Mammary epithelial cell (primary cell): ENCODE measurements at regions of chr1 and their contacts with region 1.

Region 1: DNA sequence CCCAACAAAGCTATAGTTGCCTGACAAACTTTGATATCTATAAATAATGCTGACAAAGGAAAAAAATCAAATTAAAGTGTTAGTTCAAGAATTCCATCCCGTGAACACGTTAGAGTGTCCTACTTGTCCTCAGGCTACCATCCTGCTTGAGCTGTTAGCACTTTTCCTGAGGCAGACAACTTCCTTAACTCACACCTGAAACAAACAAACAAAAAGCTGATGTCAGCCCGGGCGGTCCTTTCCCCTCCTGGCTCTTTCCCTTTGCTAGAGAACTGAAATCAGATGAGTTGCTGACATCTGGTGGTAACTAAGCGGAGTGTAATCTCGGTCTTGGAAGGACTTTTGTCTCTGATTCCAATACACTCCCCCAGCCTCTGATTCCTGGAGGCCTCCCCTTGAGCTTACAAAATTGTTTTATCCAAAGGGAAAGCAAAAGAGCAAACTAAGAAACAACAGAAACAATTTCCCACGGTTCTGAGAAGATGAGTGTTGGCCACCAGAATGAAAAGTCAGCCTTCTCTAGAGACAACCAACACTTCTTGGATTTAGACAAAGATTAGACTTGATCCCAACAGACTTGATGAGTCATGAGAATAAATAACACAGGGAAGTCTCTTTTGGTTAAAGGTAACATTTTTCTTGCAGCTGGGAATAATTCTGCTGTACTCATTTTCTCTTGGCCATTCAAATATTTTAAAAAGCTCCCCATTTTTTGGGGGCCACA is 135.4 kb downstream of the PROX1 start:
- DNase-seq: peak; percentile 46
- H3K4me3 ChIP-seq: no peak overlapping the region
- H3K27ac ChIP-seq: no peak overlapping the region
- H3K4me1 ChIP-seq: no peaks in the 10 kb centered on the region
- H3K27me3 ChIP-seq: no peaks in the 10 kb centered on the region
- CTCF ChIP-seq: peak; percentile 57 to 71

Region 2: DNA sequence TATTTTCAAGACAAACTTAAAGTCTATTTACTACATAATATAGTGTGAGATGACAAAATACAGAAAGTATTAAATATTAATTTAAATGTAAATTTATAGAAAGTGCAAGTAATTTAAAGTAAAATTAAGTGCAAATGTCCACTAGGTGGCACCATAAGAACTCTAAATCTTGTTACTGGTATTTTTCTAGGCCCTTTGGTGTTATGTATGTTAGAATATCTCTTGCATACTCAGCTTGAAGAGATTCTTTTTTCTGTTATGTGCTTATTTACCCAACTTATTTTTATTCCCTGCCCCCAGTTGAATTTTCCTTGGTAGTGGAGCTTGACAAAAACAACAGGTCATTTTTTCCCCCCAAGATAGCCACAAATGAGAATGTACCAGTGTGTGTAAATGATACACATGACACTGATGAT is 1000.7 kb before region 1 on chr1:
- CTCF ChIA-PET with region 1: no interaction called
- dilution Hi-C with region 1: no loop called
- in situ Hi-C with region 1: no loop called
- intact Hi-C with region 1: loop called (anchors 1 kb)
- DNase-seq: peak; percentile 24
- H3K4me3 ChIP-seq: no peak overlapping the region
- H3K27ac ChIP-seq: no peak overlapping the region
- H3K4me1 ChIP-seq: peaks cover 21% of the 10 kb centered on the region
- H3K27me3 ChIP-seq: no peaks in the 10 kb centered on the region
- CTCF ChIP-seq: peak; percentile 32 to 43

Region 3: GRCh38 chr1:213374369-213374768 is 748.9 kb before region 1 on chr1:
- CTCF ChIA-PET with region 1: no interaction called
- dilution Hi-C with region 1: no loop called
- in situ Hi-C with region 1: loop called (anchors 10 kb)
- intact Hi-C with region 1: loop called (anchors 1 kb)
- DNase-seq: peak; percentile 23
- H3K4me3 ChIP-seq: no peak overlapping the region
- H3K27ac ChIP-seq: no peak overlapping the region
- H3K4me1 ChIP-seq: no peaks in the 10 kb centered on the region
- H3K27me3 ChIP-seq: no peaks in the 10 kb centered on the region
- CTCF ChIP-seq: peak; percentile 83 to 90

Region 4: DNA sequence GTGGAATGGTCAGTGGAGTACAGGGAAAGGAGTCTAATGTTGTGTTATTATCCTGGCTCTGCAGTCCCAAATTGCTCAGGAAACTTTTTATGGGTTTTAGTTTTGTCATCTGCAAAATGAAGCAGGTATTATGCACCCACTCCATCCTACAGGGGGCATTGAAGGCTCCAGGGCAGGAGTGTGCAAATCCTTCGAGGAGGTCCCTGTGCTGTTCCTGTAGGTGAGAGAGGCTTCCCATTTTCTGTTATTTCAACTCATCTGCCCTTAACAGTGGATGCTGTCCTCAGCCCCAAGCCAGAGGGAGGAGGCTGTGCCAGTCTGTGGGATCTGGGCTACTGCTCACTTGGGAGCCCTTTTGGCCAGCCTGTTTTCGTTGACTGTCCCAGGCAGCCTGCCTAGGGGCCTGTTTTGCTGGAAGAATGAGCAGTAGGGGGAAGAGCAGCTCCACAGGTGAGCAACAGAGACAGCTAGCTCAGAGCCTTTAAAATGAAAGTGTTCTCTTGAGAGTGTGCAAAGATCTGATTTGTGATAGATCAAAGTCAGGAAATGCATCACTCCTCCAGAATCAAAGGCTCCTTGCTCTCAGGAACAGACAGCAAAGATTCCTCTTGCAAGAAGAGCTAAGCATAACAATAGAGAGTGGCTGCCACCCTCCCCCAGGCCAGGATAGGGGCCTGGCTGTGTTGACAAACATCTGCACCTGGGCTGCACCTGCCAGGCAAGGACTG is 453.1 kb before region 1 on chr1:
- CTCF ChIA-PET with region 1: no interaction called
- dilution Hi-C with region 1: no loop called
- in situ Hi-C with region 1: no loop called
- intact Hi-C with region 1: loop called (anchors 10 kb)
- DNase-seq: no peak
- H3K4me3 ChIP-seq: no peak overlapping the region
- H3K27ac ChIP-seq: no peak overlapping the region
- H3K4me1 ChIP-seq: no peaks in the 10 kb centered on the region
- H3K27me3 ChIP-seq: no peaks in the 10 kb centered on the region
- CTCF ChIP-seq: no peak

Region 5: DNA sequence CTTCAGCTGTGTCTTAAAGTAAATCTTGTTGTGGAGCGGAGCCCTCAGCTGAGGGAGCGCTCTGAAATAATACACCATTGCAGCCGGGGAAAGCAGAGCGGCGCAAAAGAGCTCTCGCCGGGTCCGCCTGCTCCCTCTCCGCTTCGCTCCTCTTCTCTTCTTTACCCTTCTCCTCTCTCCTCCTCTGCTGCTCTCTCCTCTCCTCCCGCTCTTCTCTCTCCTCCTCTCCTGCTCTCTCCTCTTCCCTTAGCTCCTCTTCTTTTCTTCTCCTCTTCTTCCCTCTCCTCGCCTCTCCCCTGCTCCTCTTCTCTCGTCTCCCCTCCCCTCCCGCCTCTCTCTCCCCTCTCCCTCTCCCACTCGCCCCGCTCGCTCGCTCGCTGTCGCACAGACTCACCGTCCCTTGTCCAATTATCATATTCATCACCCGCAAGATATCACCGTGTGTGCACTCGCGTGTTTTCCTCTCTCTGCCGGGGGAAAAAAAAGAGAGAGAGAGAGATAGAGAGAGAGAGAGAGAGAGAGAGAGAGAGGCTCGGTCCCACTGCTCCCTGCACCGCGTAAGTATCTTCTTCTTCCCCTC is 135.2 kb before region 1 on chr1 and contains the start of gene PROX1:
- CTCF ChIA-PET with region 1: no interaction called
- dilution Hi-C with region 1: no loop called
- in situ Hi-C with region 1: no loop called
- intact Hi-C with region 1: loop called (anchors 5 kb)
- DNase-seq: peak; percentile 68
- H3K4me3 ChIP-seq: peak within 1 kb of the TSS; percentile 49 to 61 (median 51)
- H3K27ac ChIP-seq: no peak within 1 kb of the TSS
- H3K4me1 ChIP-seq: peaks cover 9% of the 10 kb centered on the region
- H3K27me3 ChIP-seq: peaks cover 60% of the 10 kb centered on the region
- CTCF ChIP-seq: peak in 1 of 2 donors; percentile 6
- total RNA-seq, gene PROX1: 0.33 to 0.35 TPM

Region 6: GRCh38 chr1:214277704-214278635 is 154.7 kb after region 1 on chr1:
- CTCF ChIA-PET with region 1: no interaction called
- dilution Hi-C with region 1: no loop called
- in situ Hi-C with region 1: no loop called
- intact Hi-C with region 1: no loop called
- DNase-seq: no peak
- H3K4me3 ChIP-seq: no peak overlapping the region
- H3K27ac ChIP-seq: no peak overlapping the region
- H3K4me1 ChIP-seq: peaks cover 13% of the 10 kb centered on the region
- H3K27me3 ChIP-seq: peaks cover 1% of the 10 kb centered on the region
- CTCF ChIP-seq: no peak